ENCODE measurements at regions of chr16 and their contacts with region 1.

Region 1: GRCh38 chr16:31108035-31108793 is at the start of gene BCKDK:
- DNase-seq: peak; percentile 58
- ATAC-seq: peak; percentile 87
- H3K4me3 ChIP-seq: peak within 1 kb of the TSS; percentile 87 to 100 (median 94)
- H3K27ac ChIP-seq: peak within 1 kb of the TSS; percentile 54
- H3K4me1 ChIP-seq: peaks cover 42% of the 10 kb centered on the region
- H3K27me3 ChIP-seq: no peaks in the 10 kb centered on the region
- CTCF ChIP-seq: peak; percentile 29; the same call in 1 of the 2 replicates
- EP300 ChIP-seq: no peak
- POLR2A ChIP-seq: peak; percentile 50 to 84
- RAD21 ChIP-seq: peak; percentile 46; the same call in 1 of the 2 replicates
- total RNA-seq, gene BCKDK: 24.9 and 25.2 TPM in 2 replicates

Region 2: GRCh38 chr16:31142109-31143010 is 34.1 kb after region 1 on chr16:
- CTCF ChIA-PET with region 1: interaction called, 9 read pairs
- POLR2A ChIA-PET with region 1: interaction called, 21 read pairs
- in situ Hi-C with region 1: no loop called
- intact Hi-C with region 1: loop called (anchors 2 kb)
- DNase-seq: peak; percentile 98
- ATAC-seq: peak; percentile 74
- H3K4me3 ChIP-seq: peak overlapping the region; percentile 39 to 77 (median 64)
- H3K27ac ChIP-seq: peak overlapping the region; percentile 80
- H3K4me1 ChIP-seq: peaks cover 65% of the 10 kb centered on the region
- H3K27me3 ChIP-seq: peaks cover 0 to 14% of the 10 kb centered on the region in 2 experiments; a peak in 3 of 5 replicates
- CTCF ChIP-seq: peak; percentile 98
- EP300 ChIP-seq: peak; percentile 26 to 27; a peak in 1 of 4 replicates
- POLR2A ChIP-seq: no peak
- RAD21 ChIP-seq: peak; percentile 99

Region 3: DNA sequence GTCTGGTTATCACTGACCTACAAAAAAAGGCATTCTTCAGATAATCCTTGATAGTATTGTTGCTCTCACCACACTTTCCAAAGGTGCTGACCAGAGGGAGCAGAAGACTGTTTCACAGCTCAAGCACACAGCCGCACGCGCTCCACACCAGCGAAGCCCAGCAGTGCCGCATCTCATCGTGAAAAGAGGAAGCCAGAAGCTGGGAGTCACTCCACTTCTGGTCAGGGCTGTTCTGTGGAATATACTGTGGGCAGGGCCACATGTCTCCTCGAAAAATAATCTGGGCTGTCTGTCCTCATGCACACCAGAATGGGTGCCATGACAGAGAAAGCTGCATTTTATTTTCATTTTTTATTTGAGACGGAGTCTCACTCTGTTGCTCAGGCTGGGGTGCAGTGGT is 48.9 kb after region 1 on chr16:
- CTCF ChIA-PET with region 1: no interaction called
- POLR2A ChIA-PET with region 1: no interaction called
- in situ Hi-C with region 1: no loop called
- intact Hi-C with region 1: loop called (anchors 5 kb)
- DNase-seq: no peak
- ATAC-seq: peak; percentile 57
- H3K4me3 ChIP-seq: no peak overlapping the region
- H3K27ac ChIP-seq: no peak overlapping the region
- H3K4me1 ChIP-seq: peaks cover 8% of the 10 kb centered on the region
- H3K27me3 ChIP-seq: peaks cover 4 to 32% of the 10 kb centered on the region in 2 experiments; a peak in 4 of 5 replicates
- CTCF ChIP-seq: no peak
- EP300 ChIP-seq: no peak
- POLR2A ChIP-seq: no peak
- RAD21 ChIP-seq: no peak

Region 4: GRCh38 chr16:31253642-31254045 is 145.4 kb after region 1 on chr16:
- CTCF ChIA-PET with region 1: no interaction called
- POLR2A ChIA-PET with region 1: no interaction called
- in situ Hi-C with region 1: no loop called
- intact Hi-C with region 1: no loop called
- DNase-seq: peak; percentile 23
- ATAC-seq: peak; percentile 63
- H3K4me3 ChIP-seq: no peak overlapping the region
- H3K27ac ChIP-seq: no peak overlapping the region
- H3K4me1 ChIP-seq: peaks cover 10% of the 10 kb centered on the region
- H3K27me3 ChIP-seq: no peaks in the 10 kb centered on the region; a peak in 1 of 5 replicates
- CTCF ChIP-seq: no peak
- EP300 ChIP-seq: 0 out of 4 replicates have a peak, but pooled peaks of 1 of the 2 experiments have one; percentile 16
- POLR2A ChIP-seq: no peak
- RAD21 ChIP-seq: no peak